Naive thymus-derived CD4-positive, alpha-beta T cell (primary cell): ENCODE measurements at regions of chr12 and their contacts with region 1.

Region 1: GRCh38 chr12:46523863-46524770 is 151.5 kb upstream of the SLC38A2 start:
- DNase-seq: peak in 8 of 9 donors; percentile 53 to 76 (median 69)
- ATAC-seq: peak; percentile 95
- H3K4me3 ChIP-seq: peak overlapping the region; percentile 5
- H3K4me3 Mint-ChIP-seq: peak overlapping the region; percentile 68 to 84 (median 76)
- H3K27ac ChIP-seq: peak overlapping the region; percentile 48
- H3K27ac Mint-ChIP-seq: peak overlapping the region; percentile 83 to 97 (median 90)
- H3K4me1 ChIP-seq: peaks cover 7 to 19% of the 10 kb centered on the region in 2 donors
- H3K4me1 Mint-ChIP-seq: peaks cover 21 to 57% (median 44%) of the 10 kb centered on the region in 7 donors
- H3K27me3 ChIP-seq: no peaks in the 10 kb centered on the region
- H3K27me3 Mint-ChIP-seq: no peaks in the 10 kb centered on the region

Region 2: DNA sequence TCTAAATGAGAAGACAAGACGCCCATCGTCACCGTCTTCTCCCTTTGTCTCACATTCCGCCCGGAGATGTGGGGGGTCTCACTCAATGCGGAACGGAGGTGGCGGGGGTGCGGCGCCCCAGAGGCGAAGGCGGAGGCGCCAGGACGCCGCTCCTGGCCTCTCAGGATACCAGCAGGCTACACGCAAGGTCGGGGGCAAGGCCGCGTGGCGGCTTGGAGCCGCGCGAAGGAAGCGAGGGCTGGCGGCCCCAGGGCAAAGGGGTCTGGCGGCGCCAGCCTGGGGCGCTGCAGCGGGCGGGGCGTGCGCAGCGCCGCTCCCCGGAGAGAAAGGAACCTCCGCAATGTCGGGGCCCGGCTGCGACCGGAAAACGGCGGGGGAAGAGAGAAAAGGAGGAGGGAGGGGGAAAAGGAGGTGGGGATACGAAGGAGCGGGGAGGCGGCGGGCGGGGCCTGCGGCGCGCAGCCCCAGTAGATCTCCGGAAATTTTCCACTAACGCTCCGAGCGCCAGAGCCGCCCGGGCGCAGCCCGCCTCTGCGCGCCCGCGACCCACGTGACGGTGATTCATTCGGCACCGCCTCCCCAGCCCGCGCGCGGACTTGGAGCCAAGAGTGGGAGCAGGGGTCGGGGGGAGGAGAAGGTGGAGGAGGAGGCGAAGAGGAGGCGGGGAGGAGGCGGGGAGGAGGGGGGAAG is 141.0 kb before region 1 on chr12:
- CTCF ChIA-PET with region 1: no interaction called
- POLR2A ChIA-PET with region 1: interaction called, 8 read pairs
- intact Hi-C with region 1: loop called in 1 of 2 experiments (anchors 1 kb)
- DNase-seq: peak; percentile 76 to 96 (median 90)
- ATAC-seq: peak; percentile 89
- H3K4me3 ChIP-seq: peak overlapping the region; percentile 61
- H3K4me3 Mint-ChIP-seq: peak overlapping the region; percentile 82 to 95 (median 91)
- H3K27ac ChIP-seq: peak overlapping the region; percentile 94
- H3K27ac Mint-ChIP-seq: peak overlapping the region; percentile 90 to 98 (median 97)
- H3K4me1 ChIP-seq: peaks cover 5 to 25% of the 10 kb centered on the region in 2 donors
- H3K4me1 Mint-ChIP-seq: peaks cover 24 to 53% (median 47%) of the 10 kb centered on the region in 7 donors
- H3K27me3 ChIP-seq: no peaks in the 10 kb centered on the region
- H3K27me3 Mint-ChIP-seq: no peaks in the 10 kb centered on the region

Region 3: GRCh38 chr12:46473634-46474329 is 50.3 kb before region 1 on chr12:
- CTCF ChIA-PET with region 1: no interaction called
- POLR2A ChIA-PET with region 1: no interaction called
- intact Hi-C with region 1: loop called in 1 of 2 experiments (anchors 2 kb)
- DNase-seq: no peak
- ATAC-seq: peak; percentile 76
- H3K4me3 ChIP-seq: no peak overlapping the region
- H3K4me3 Mint-ChIP-seq: peak overlapping the region in 6 of 10 donors; percentile 4 to 48 (median 25)
- H3K27ac ChIP-seq: peak overlapping the region; percentile 11
- H3K27ac Mint-ChIP-seq: peak overlapping the region in 3 of 9 donors; percentile 66 to 69 (median 68)
- H3K4me1 ChIP-seq: peaks cover 0 to 15% of the 10 kb centered on the region in 2 donors
- H3K4me1 Mint-ChIP-seq: peaks cover 15 to 50% (median 22%) of the 10 kb centered on the region in 7 donors
- H3K27me3 ChIP-seq: no peaks in the 10 kb centered on the region
- H3K27me3 Mint-ChIP-seq: no peaks in the 10 kb centered on the region

Region 4: GRCh38 chr12:46585854-46586621 is 61.9 kb after region 1 on chr12:
- CTCF ChIA-PET with region 1: no interaction called
- POLR2A ChIA-PET with region 1: interaction called, 4 read pairs
- intact Hi-C with region 1: loop called in 1 of 2 experiments (anchors 2 kb)
- DNase-seq: peak in 7 of 9 donors; percentile 33 to 81 (median 71)
- ATAC-seq: peak; percentile 27
- H3K4me3 ChIP-seq: peak overlapping the region; percentile 46
- H3K4me3 Mint-ChIP-seq: peak overlapping the region; percentile 13 to 82 (median 68)
- H3K27ac ChIP-seq: no peak overlapping the region
- H3K27ac Mint-ChIP-seq: peak overlapping the region; percentile 6 to 95 (median 91)
- H3K4me1 ChIP-seq: peaks cover 5 to 21% of the 10 kb centered on the region in 2 donors
- H3K4me1 Mint-ChIP-seq: peaks cover 29 to 79% (median 74%) of the 10 kb centered on the region in 7 donors
- H3K27me3 ChIP-seq: no peaks in the 10 kb centered on the region
- H3K27me3 Mint-ChIP-seq: no peaks in the 10 kb centered on the region

Region 5: GRCh38 chr12:47882781-47883546 is 1358.8 kb after region 1 on chr12:
- CTCF ChIA-PET with region 1: no interaction called
- POLR2A ChIA-PET with region 1: no interaction called
- intact Hi-C with region 1: loop called in 1 of 2 experiments (anchors 10 kb)
- DNase-seq: peak in 7 of 9 donors; percentile 30 to 60 (median 55)
- ATAC-seq: peak; percentile 71
- H3K4me3 ChIP-seq: peak overlapping the region; percentile 73
- H3K4me3 Mint-ChIP-seq: peak overlapping the region; percentile 84 to 95 (median 90)
- H3K27ac ChIP-seq: peak overlapping the region; percentile 50
- H3K27ac Mint-ChIP-seq: peak overlapping the region; percentile 72 to 99 (median 95)
- H3K4me1 ChIP-seq: peaks cover 14 to 38% of the 10 kb centered on the region in 2 donors
- H3K4me1 Mint-ChIP-seq: peaks cover 33 to 82% (median 54%) of the 10 kb centered on the region in 7 donors
- H3K27me3 ChIP-seq: no peaks in the 10 kb centered on the region
- H3K27me3 Mint-ChIP-seq: no peaks in the 10 kb centered on the region